PC-9 (cell line): ENCODE measurements at regions of chr1 and their contacts with region 1.

Region 1: DNA sequence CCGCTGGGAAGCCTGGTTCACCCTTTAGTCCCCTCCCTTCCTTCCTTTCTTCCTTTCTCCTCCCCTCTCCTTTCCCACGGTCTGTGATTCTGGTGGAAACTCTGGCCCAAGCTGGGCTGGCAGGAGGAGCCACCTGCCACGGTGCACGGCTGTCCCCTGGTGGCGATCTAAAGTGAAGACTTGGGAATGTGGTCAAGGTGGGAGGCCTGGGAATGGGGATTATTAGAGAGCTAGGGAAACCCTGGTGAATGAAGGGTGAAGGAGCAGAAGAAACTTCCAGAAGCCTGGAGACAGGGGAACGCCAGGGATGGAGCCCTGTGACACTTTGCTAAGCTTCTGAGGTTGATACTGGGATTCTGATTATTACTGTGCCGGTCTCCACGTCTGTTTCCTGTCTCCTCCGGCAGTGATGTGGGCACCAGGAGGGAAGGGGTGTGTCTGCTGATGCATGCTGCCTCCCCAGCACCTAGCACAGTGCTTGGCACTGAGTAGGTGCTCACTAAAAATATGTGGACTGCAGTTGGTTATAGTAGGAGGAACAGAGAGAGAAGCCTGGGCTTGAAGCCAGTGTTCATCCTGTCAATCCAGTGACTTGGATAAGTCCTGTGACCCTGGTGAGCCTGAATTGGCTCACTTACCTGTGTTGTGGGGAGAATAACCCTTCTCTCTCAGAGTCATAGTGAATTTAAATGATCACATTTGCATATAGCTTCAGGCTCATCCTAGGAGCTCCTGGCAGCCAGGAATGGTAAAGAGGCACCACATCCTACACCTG is 71.2 kb upstream of the NBPF3 start:
- DNase-seq: peak; percentile 43 to 72
- H3K4me3 ChIP-seq: no peak overlapping the region
- H3K27ac ChIP-seq: no peak overlapping the region
- H3K4me1 ChIP-seq: no peaks in the 10 kb centered on the region; the same call in 1 of the 2 replicates
- H3K27me3 ChIP-seq: no peaks in the 10 kb centered on the region
- CTCF ChIP-seq: peak; percentile 96

Region 2: GRCh38 chr1:20696397-20697329 is 672.0 kb before region 1 on chr1:
- CTCF ChIA-PET with region 1: no interaction called
- POLR2A ChIA-PET with region 1: no interaction called
- intact Hi-C with region 1: no loop called
- DNase-seq: peak; percentile 67 to 90
- H3K4me3 ChIP-seq: peak overlapping the region; percentile 65; the same call in 1 of the 2 replicates
- H3K27ac ChIP-seq: peak overlapping the region; percentile 53; the same call in 1 of the 2 replicates
- H3K4me1 ChIP-seq: peaks cover 5% of the 10 kb centered on the region; the same call in 1 of the 2 replicates
- H3K27me3 ChIP-seq: no peaks in the 10 kb centered on the region
- CTCF ChIP-seq: peak; percentile 84

Region 3: DNA sequence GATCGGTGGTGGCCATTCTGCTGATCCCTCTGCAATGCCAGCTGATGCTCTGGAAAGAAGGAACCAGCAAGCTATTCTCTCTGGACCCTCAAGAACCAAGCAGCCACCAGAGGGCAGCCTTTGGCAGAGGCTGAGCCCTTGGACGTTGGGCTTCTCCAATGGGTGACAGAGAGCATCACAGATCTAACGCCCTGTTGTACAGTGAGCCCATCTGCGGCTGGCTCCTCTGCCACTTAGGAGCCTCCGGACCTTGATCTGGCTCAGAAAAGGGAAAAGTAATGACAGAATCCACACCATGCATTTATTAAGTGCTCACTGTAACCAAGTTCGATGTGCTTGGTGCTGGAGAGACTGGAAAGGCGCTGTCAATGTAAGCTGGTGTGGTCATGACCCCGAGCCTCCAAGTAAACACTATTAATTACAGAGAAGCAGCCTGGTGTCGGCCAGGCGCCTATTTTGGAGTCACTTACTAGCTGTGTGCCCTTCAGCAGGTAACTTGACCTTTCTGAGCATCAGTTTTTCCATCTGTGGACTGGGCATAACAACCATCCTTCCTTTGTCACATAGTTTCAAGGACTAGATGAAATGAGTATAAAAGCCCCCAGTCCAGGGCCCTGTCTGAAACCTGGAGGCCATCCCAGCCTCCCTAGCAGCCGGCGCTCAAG is 113.3 kb before region 1 on chr1:
- CTCF ChIA-PET with region 1: interaction called, 6 read pairs
- POLR2A ChIA-PET with region 1: no interaction called
- intact Hi-C with region 1: loop called (anchors 1 kb)
- DNase-seq: peak; percentile 42 to 75
- H3K4me3 ChIP-seq: no peak overlapping the region
- H3K27ac ChIP-seq: no peak overlapping the region
- H3K4me1 ChIP-seq: peaks cover 20% of the 10 kb centered on the region
- H3K27me3 ChIP-seq: no peaks in the 10 kb centered on the region
- CTCF ChIP-seq: peak; percentile 77

Region 4: GRCh38 chr1:21334214-21335087 is 34.3 kb before region 1 on chr1:
- CTCF ChIA-PET with region 1: no interaction called
- POLR2A ChIA-PET with region 1: no interaction called
- intact Hi-C with region 1: no loop called
- DNase-seq: peak; percentile 86 to 92
- H3K4me3 ChIP-seq: peak overlapping the region; percentile 42; the same call in 1 of the 2 replicates
- H3K27ac ChIP-seq: peak overlapping the region; percentile 94
- H3K4me1 ChIP-seq: peaks cover 89% of the 10 kb centered on the region
- H3K27me3 ChIP-seq: no peaks in the 10 kb centered on the region
- CTCF ChIP-seq: peak; percentile 67

Region 5: GRCh38 chr1:21490774-21491553 is 122.3 kb after region 1 on chr1:
- CTCF ChIA-PET with region 1: interaction called, 18 read pairs
- POLR2A ChIA-PET with region 1: no interaction called
- intact Hi-C with region 1: no loop called
- DNase-seq: peak; percentile 27 to 44
- H3K4me3 ChIP-seq: no peak overlapping the region
- H3K27ac ChIP-seq: no peak overlapping the region
- H3K4me1 ChIP-seq: no peaks in the 10 kb centered on the region
- H3K27me3 ChIP-seq: no peaks in the 10 kb centered on the region
- CTCF ChIP-seq: peak; percentile 63

Region 6: GRCh38 chr1:21573971-21574465 is 205.3 kb after region 1 on chr1:
- CTCF ChIA-PET with region 1: no interaction called
- POLR2A ChIA-PET with region 1: no interaction called
- intact Hi-C with region 1: loop called (anchors 1 kb)
- DNase-seq: peak; percentile 42 to 68
- H3K4me3 ChIP-seq: no peak overlapping the region
- H3K27ac ChIP-seq: no peak overlapping the region
- H3K4me1 ChIP-seq: no peaks in the 10 kb centered on the region
- H3K27me3 ChIP-seq: no peaks in the 10 kb centered on the region
- CTCF ChIP-seq: peak; percentile 63

Region 7: GRCh38 chr1:21782868-21783678 is 414.4 kb after region 1 on chr1 and contains the start of gene USP48:
- CTCF ChIA-PET with region 1: no interaction called
- POLR2A ChIA-PET with region 1: no interaction called
- intact Hi-C with region 1: no loop called
- DNase-seq: peak; percentile 82 to 97
- H3K4me3 ChIP-seq: peak within 1 kb of the TSS; percentile 96
- H3K27ac ChIP-seq: peak within 1 kb of the TSS; percentile 99
- H3K4me1 ChIP-seq: peaks cover 12% of the 10 kb centered on the region
- H3K27me3 ChIP-seq: no peaks in the 10 kb centered on the region
- CTCF ChIP-seq: 0 out of 2 replicates have a peak, but pooled peaks have one; percentile 13
- total RNA-seq, gene USP48: 63.1 and 63.5 TPM in 2 replicates

Region 8: DNA sequence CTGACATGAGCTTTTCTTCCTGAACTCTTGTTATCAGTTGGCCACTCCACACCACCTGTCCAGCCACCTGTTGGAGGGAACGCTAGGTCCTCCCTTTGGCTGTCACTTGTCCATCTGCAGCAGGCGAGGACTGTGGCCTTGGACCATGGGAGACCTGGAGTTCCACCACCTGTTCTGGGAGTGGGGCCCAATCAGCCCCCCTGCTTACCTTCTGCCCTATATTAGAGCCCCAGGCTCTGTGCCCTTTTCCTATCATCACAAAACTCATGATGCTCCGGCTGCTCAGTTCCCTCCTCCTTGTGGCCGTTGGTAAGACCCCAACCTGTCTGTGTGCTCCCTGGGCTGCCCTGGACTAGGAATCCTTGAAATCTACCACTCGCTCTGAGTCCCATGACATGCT is 632.7 kb after region 1 on chr1 and contains the start of gene CELA3A:
- CTCF ChIA-PET with region 1: no interaction called
- POLR2A ChIA-PET with region 1: no interaction called
- intact Hi-C with region 1: loop called (anchors 5 kb)
- DNase-seq: no peak
- H3K4me3 ChIP-seq: no peak within 1 kb of the TSS
- H3K27ac ChIP-seq: no peak within 1 kb of the TSS
- H3K4me1 ChIP-seq: peaks cover 10% of the 10 kb centered on the region
- H3K27me3 ChIP-seq: no peaks in the 10 kb centered on the region
- CTCF ChIP-seq: no peak
- total RNA-seq, gene CELA3A: not detected in 2 replicates